CD8-positive, alpha-beta memory T cell (primary cell): ENCODE measurements at regions of chr1 and their contacts with region 1.

Region 1: DNA sequence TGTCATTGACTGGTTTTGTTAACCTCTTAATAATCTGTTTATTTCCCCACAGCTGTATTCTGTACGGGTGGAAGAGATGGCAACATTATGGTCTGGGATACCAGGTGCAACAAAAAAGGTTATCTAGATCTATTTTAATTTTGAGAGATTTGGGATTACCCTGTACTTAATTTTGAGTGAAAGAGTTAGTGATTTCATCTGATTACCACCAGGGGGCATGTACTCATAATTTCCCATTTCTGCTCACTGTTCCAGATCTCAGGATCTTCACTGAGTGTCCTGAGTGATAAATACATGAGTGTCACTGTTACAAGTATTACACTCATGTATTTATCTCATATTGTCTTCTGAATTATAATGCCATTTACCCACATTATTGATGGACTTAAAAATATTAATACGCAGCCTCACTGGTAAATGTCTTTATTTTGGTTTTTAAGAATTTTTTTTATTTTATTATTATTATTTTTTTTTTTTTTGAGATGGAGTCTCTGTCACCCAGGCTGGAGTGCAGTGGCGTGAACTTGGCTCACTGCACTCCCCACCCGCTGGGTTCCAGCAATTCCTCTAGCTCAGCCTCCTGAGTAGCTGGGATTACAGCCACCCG is 27.4 kb downstream of the DTL start:
- DNase-seq: peak in 2 of 5 donors; percentile 24
- H3K4me3 ChIP-seq: no peak overlapping the region
- H3K4me3 Mint-ChIP-seq: no peak overlapping the region
- H3K27ac ChIP-seq: no peak overlapping the region
- H3K27ac Mint-ChIP-seq: no peak overlapping the region
- H3K4me1 ChIP-seq: no peaks in the 10 kb centered on the region
- H3K4me1 Mint-ChIP-seq: no peaks in the 10 kb centered on the region
- H3K27me3 ChIP-seq: no peaks in the 10 kb centered on the region
- H3K27me3 Mint-ChIP-seq: no peaks in the 10 kb centered on the region

Region 2: GRCh38 chr1:212291505-212292134 is 228.7 kb after region 1 on chr1:
- CTCF ChIA-PET with region 1: interaction called, 12 read pairs
- POLR2A ChIA-PET with region 1: no interaction called
- DNase-seq: peak in 2 of 5 donors; percentile 49 to 59
- H3K4me3 ChIP-seq: no peak overlapping the region
- H3K4me3 Mint-ChIP-seq: peak overlapping the region; percentile 25 to 73 (median 53)
- H3K27ac ChIP-seq: no peak overlapping the region
- H3K27ac Mint-ChIP-seq: peak overlapping the region; percentile 2 to 76 (median 46)
- H3K4me1 ChIP-seq: peaks cover 83% of the 10 kb centered on the region
- H3K4me1 Mint-ChIP-seq: peaks cover 80 to 95% (median 91%) of the 10 kb centered on the region in 3 donors
- H3K27me3 ChIP-seq: no peaks in the 10 kb centered on the region
- H3K27me3 Mint-ChIP-seq: no peaks in the 10 kb centered on the region

Region 3: DNA sequence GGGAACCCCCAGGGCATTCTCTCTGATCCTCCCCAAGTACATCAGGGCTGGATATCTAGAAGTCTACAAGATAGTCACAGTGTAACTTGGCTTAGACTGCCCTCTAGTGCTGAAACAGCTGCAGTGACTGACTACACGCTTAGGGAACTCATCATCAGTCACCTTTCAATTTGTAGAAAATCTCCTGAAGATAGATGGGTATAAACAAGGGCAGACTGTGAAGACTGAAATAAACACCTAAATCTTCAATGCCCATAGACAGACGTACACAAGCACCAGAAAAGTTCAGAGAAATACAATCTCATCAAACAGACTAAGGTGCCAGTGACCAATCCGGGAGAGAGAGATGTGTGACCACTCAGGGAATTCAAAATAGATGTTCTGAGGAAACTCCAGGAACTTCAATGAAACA is 305.1 kb after region 1 on chr1:
- CTCF ChIA-PET with region 1: interaction called, 19 read pairs
- POLR2A ChIA-PET with region 1: no interaction called
- DNase-seq: peak; percentile 13 to 64 (median 40)
- H3K4me3 ChIP-seq: no peak overlapping the region
- H3K4me3 Mint-ChIP-seq: no peak overlapping the region
- H3K27ac ChIP-seq: no peak overlapping the region
- H3K27ac Mint-ChIP-seq: peak overlapping the region in 2 of 8 donors; percentile 6 to 25
- H3K4me1 ChIP-seq: no peaks in the 10 kb centered on the region
- H3K4me1 Mint-ChIP-seq: peaks cover 0 to 11% (median 0%) of the 10 kb centered on the region in 3 donors
- H3K27me3 ChIP-seq: no peaks in the 10 kb centered on the region
- H3K27me3 Mint-ChIP-seq: no peaks in the 10 kb centered on the region